Transverse colon (tissue), 4 donors: ENCODE measurements at regions of chr10 and their contacts with region 1.

Region 1: DNA sequence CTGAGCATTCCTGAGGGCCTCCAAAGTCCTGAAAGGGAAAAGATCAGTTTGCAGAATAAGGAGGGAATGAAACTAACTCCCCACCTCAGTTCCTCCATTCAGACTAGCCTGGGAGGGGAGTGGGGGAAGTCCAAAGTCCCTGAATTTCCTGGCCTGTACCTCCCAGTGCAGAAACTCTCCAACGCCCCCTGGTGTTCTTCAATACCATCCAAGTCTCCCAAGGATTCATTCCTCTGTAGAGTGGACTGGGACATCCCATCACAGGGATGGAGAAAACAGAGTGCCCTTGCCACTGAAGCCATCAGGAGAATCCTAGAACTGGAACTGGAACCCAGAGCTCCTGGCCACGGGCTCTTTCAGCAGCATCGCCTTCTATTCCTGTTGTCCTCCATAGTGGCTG is 1.6 kb upstream of the COL13A1 start:
- DNase-seq: peak; percentile 51
- H3K4me3 ChIP-seq: no peak overlapping the region
- H3K27ac ChIP-seq: no peak overlapping the region
- H3K4me1 ChIP-seq: peaks cover 0 to 25% (median 19%) of the 10 kb centered on the region in 4 donors
- H3K27me3 ChIP-seq: peaks cover 37% of the 10 kb centered on the region
- CTCF ChIP-seq: peak; percentile 45 to 58 (median 54)
- EP300 ChIP-seq: no peak
- POLR2A ChIP-seq: no peak

Region 2: DNA sequence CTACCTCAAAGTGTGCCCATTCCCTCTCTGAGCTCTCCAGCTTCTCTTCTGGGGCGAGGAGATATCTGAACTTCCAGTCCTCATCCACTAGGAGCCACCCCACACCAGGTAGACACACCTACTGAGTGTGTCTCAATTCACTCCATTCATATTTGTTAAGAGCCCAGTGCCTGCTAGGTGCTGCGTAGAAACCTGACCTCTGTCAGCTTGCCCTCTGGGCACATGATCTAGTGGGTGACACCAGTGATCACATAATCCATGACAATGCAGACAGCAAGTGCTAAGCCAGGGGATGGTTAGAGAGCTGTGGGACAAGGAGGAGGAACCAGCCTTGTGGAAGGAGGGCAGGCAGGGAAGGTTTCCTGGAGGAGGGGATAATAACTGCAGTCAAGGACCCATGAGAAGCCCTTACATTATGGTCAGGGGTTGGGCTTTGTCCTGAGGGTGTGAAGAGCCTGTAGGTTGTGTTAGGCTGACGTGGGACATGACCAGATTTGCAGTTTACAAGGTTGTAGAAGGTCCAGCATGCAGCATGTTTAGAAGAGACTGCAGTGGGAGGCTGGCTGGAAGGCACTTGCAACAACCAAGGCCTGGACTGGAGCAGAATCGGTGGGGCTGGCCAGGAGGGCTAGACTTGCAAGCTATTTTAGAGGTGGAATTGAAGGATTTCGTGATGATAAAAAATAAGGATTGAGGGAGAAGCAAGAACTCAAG is 83.4 kb after region 1 on chr10:
- in situ Hi-C with region 1: no loop called
- intact Hi-C with region 1: no loop called
- DNase-seq: peak; percentile 46
- H3K4me3 ChIP-seq: no peak overlapping the region
- H3K27ac ChIP-seq: no peak overlapping the region
- H3K4me1 ChIP-seq: peaks cover 0 to 11% (median 3%) of the 10 kb centered on the region in 4 donors
- H3K27me3 ChIP-seq: no peaks in the 10 kb centered on the region
- CTCF ChIP-seq: peak; percentile 30 to 78 (median 50)
- EP300 ChIP-seq: no peak
- POLR2A ChIP-seq: no peak

Region 3: GRCh38 chr10:69914398-69915214 is 114.5 kb after region 1 on chr10:
- in situ Hi-C with region 1: no loop called
- intact Hi-C with region 1: loop called (anchors 5 kb)
- DNase-seq: peak; percentile 78
- H3K4me3 ChIP-seq: no peak overlapping the region
- H3K27ac ChIP-seq: no peak overlapping the region
- H3K4me1 ChIP-seq: peaks cover 17 to 40% (median 26%) of the 10 kb centered on the region in 4 donors
- H3K27me3 ChIP-seq: no peaks in the 10 kb centered on the region
- CTCF ChIP-seq: peak; percentile 92 to 97 (median 95)
- EP300 ChIP-seq: no peak
- POLR2A ChIP-seq: no peak

Region 4: DNA sequence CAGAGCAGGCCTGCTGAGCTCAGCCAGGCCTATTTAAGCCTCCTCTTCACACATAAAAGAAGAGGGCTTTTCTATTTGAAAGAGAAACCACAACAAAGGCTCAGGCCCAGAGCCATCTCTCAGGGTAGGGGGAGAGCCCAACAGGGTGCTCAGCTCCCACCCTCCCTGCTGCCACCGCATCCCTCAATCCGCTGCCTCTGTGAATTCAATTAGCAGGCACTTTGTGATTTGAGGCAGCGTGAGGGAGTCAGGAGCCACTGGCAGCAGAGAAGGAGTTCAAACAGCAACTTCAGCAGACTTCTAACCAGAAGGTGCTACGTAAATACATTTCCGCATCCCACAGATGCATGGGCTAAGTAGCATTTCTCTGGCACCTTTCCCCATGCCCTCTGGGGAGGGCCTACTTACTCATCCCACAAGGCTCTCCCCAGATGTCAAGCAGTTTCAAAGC is 537.1 kb after region 1 on chr10:
- in situ Hi-C with region 1: no loop called
- intact Hi-C with region 1: no loop called
- DNase-seq: peak; percentile 4
- H3K4me3 ChIP-seq: no peak overlapping the region
- H3K27ac ChIP-seq: no peak overlapping the region
- H3K4me1 ChIP-seq: peaks cover 0 to 9% (median 2%) of the 10 kb centered on the region in 4 donors
- H3K27me3 ChIP-seq: no peaks in the 10 kb centered on the region
- CTCF ChIP-seq: no peak
- EP300 ChIP-seq: no peak
- POLR2A ChIP-seq: no peak